ENCODE measurements at regions of chr14 and their contacts with region 1.

Region 1: DNA sequence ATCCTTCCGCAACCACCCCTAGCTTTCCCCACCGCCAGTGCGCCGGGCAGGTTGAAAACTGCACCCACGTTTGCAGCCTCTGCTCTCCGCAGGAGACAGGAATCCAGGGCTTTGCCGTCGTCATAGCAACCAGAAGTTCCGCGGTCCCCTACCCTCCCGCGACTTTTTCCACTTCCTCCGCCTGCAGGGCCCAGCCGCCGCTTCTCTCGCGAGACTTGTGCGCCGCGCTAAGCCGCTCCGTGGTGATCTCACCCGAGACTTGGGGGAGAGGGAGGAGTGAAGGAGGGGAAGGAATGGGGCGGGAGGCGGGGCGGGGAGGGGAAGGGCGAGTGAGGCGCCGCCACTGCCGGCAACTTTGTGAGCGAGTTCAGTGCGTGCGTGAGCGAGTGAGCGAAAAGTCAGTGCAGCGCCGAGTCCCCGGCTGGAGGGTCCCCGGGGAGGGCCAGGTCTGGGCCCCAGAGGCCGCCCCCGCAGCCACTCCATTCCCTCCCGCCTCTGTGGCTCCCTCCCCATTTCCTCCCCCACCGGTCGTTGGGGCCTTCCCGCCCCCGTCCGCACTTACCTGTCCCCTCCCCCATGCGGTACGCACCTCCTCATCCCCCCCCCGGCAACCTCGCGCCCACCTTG is 413.0 kb downstream of the PCNX1 start:
- DNase-seq: peak; percentile 99
- H3K4me3 Mint-ChIP-seq: peak within 1 kb of the TSS; percentile 88
- H3K27ac Mint-ChIP-seq: peak within 1 kb of the TSS; percentile 85
- H3K4me1 Mint-ChIP-seq: peaks cover 37% of the 10 kb centered on the region
- H3K27me3 Mint-ChIP-seq: no peaks in the 10 kb centered on the region

Region 2: GRCh38 chr14:70887207-70887681 is 433.0 kb before region 1 on chr14:
- CTCF ChIA-PET with region 1: no interaction called
- POLR2A ChIA-PET with region 1: no interaction called
- intact Hi-C with region 1: loop called (anchors 10 kb)
- DNase-seq: peak; percentile 25
- H3K4me3 Mint-ChIP-seq: peak overlapping the region; percentile 49
- H3K27ac Mint-ChIP-seq: peak overlapping the region; percentile 85
- H3K4me1 Mint-ChIP-seq: peaks cover 82% of the 10 kb centered on the region
- H3K27me3 Mint-ChIP-seq: no peaks in the 10 kb centered on the region

Region 3: DNA sequence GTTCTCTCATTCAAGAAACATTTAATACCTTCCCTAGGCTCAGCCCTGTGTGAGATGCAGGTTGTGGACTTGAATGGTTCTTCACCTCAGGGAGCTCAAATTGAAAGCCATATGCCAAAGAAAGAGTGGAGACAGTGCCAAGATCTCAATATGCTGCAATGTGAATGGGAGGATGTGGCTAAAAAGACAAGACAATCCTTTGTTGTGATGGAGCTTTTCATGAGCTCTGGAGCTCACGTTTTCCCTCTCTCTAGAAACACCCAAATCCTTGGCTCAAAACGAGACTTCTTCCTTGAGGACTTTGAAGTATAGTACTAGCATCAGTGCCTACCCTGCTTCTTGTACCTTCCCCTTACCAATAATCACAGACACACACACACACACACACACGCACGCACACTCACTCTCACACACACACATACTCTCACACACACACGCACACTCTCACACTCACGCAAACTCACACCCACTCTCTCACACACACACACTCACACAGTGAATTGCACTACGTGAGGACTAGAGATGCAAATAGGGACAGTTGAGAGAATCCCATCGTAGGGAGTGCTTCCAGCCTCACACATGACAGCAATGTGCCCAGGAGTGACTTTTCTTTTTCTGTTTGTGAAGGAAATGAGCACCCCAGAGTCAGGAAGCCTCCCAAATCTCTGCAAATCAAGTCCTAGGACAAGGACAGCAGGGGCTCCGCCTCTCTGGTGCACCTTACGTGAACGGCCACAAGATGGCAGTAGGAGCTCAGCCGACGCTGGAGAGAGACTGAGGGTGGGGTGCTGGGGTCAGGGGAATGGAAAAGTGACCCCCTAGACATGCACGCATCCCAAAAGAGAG is 181.5 kb before region 1 on chr14:
- CTCF ChIA-PET with region 1: interaction called, 8 read pairs
- POLR2A ChIA-PET with region 1: interaction called, 14 read pairs
- intact Hi-C with region 1: loop called (anchors 2 kb)
- DNase-seq: peak; percentile 68
- H3K4me3 Mint-ChIP-seq: no peak overlapping the region
- H3K27ac Mint-ChIP-seq: no peak overlapping the region
- H3K4me1 Mint-ChIP-seq: peaks cover 24% of the 10 kb centered on the region
- H3K27me3 Mint-ChIP-seq: no peaks in the 10 kb centered on the region

Region 4: DNA sequence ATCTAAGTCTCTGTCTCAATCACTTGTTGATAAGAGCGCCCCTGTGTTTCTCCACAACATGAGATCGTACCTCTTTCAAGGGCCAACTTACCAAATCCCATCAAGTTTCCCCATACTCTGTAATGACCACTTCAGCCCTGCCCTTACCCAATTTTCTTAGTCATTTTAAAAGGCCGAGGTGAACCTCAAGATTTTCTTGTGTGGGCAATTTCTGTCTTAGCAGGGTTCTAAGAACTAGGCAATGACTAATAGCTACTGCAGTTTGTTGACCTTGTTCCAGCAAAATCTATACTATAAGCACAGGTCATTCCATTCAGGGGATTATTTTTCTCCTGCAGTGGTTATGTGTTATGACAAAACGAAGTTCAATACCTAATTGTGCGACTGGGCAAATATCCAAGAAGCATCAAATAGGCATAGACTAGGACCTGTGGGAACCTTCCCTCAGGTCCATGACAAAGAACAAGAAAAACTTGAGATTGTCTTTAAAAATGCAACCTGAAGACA is 53.2 kb before region 1 on chr14:
- CTCF ChIA-PET with region 1: no interaction called
- POLR2A ChIA-PET with region 1: interaction called, 4 read pairs
- intact Hi-C with region 1: loop called (anchors 1 kb)
- DNase-seq: peak; percentile 49
- H3K4me3 Mint-ChIP-seq: peak overlapping the region; percentile 48
- H3K27ac Mint-ChIP-seq: peak overlapping the region; percentile 77
- H3K4me1 Mint-ChIP-seq: peaks cover 37% of the 10 kb centered on the region
- H3K27me3 Mint-ChIP-seq: no peaks in the 10 kb centered on the region

Region 5: GRCh38 chr14:71331403-71331802 is 11.2 kb after region 1 on chr14:
- CTCF ChIA-PET with region 1: interaction called, 3 read pairs
- POLR2A ChIA-PET with region 1: interaction called, 11 read pairs
- intact Hi-C with region 1: loop called (anchors 1 kb)
- DNase-seq: no peak
- H3K4me3 Mint-ChIP-seq: no peak overlapping the region
- H3K27ac Mint-ChIP-seq: peak overlapping the region; percentile 44
- H3K4me1 Mint-ChIP-seq: peaks cover 59% of the 10 kb centered on the region
- H3K27me3 Mint-ChIP-seq: no peaks in the 10 kb centered on the region

Region 6: GRCh38 chr14:71472043-71472960 is 152.1 kb after region 1 on chr14:
- CTCF ChIA-PET with region 1: no interaction called
- POLR2A ChIA-PET with region 1: no interaction called
- intact Hi-C with region 1: loop called (anchors 2 kb)
- DNase-seq: no peak
- H3K4me3 Mint-ChIP-seq: no peak overlapping the region
- H3K27ac Mint-ChIP-seq: no peak overlapping the region
- H3K4me1 Mint-ChIP-seq: peaks cover 34% of the 10 kb centered on the region
- H3K27me3 Mint-ChIP-seq: no peaks in the 10 kb centered on the region

Measured in activated CD4-positive, alpha-beta memory T cell treated with anti-CD3 and anti-CD28 coated beads for 36 hours (primary cell).